ENCODE measurements at regions of chr5 and their contacts with region 1.

Region 1: DNA sequence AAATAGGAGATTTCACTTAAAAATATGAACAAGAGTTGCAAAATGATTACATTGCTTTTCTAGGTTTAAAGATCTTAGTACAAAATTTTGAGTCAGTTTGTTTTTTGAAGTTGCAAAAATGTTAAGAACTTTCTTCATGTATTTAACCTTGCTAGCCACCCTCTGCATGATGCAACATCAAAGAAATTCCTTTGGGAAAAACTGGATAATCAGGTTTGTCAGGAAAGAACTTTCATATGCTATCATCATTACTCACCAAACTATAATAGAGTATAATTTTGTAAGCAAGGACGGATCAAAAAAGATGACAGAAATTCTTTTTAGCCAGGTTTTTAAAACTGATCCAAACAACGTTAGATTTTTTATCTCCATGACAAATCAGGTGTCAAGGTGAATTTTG is 116.9 kb upstream of the MRPS30 start:
- DNase-seq: peak in 1 of 2 experiments; percentile 87
- H3K4me3 ChIP-seq: peak overlapping the region; percentile 19
- H3K27ac ChIP-seq: peak overlapping the region; percentile 94
- H3K4me1 ChIP-seq: peaks cover 35% of the 10 kb centered on the region
- H3K27me3 ChIP-seq: no peaks in the 10 kb centered on the region
- CTCF ChIP-seq: no peak

Region 2: DNA sequence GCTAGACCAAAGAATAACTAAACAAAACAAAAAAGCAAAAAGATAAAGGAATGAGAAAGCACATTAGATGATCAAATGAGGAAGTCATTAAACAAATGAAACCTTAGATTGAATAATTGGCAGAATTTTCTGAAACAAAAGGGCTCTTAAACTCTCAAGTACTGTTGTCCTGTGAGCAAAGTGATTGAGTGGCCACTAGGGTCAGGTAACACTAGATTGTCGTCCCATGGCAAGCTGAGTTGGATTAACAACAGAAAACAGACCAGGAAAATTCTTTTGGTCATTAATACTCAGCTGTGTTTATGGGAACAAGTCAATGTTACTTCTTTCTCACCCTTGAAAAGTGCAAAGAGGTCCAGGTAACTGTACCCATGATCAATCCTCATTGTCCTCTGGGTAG is 35.3 kb after region 1 on chr5:
- CTCF ChIA-PET with region 1: no interaction called
- POLR2A ChIA-PET with region 1: no interaction called
- intact Hi-C with region 1: no loop called
- DNase-seq: no peak
- H3K4me3 ChIP-seq: no peak overlapping the region
- H3K27ac ChIP-seq: no peak overlapping the region
- H3K4me1 ChIP-seq: no peaks in the 10 kb centered on the region
- H3K27me3 ChIP-seq: no peaks in the 10 kb centered on the region
- CTCF ChIP-seq: no peak

Region 3: GRCh38 chr5:44875661-44876605 is 184.1 kb after region 1 on chr5:
- CTCF ChIA-PET with region 1: no interaction called
- POLR2A ChIA-PET with region 1: no interaction called
- intact Hi-C with region 1: loop called (anchors 5 kb)
- DNase-seq: peak; percentile 64 to 95
- H3K4me3 ChIP-seq: peak overlapping the region; percentile 34
- H3K27ac ChIP-seq: peak overlapping the region; percentile 89
- H3K4me1 ChIP-seq: peaks cover 19% of the 10 kb centered on the region
- H3K27me3 ChIP-seq: no peaks in the 10 kb centered on the region
- CTCF ChIP-seq: no peak

Measured in PC-9 (cell line).